A549 (cell line): ENCODE measurements at regions of chr12 and their contacts with region 1.

Region 1: GRCh38 chr12:3803865-3804472 is 51.1 kb upstream of the CRACR2A start:
- DNase-seq: peak; percentile 41 to 79
- ATAC-seq: peak; percentile 88 to 96
- H3K4me3 ChIP-seq: no peak overlapping the region
- H3K27ac ChIP-seq: no peak overlapping the region
- H3K4me1 ChIP-seq: no peaks in the 10 kb centered on the region
- CTCF ChIP-seq: peak; percentile 86
- EP300 ChIP-seq: no peak
- POLR2A ChIP-seq: no peak
- RAD21 ChIP-seq: peak; percentile 86 to 89

Region 2: DNA sequence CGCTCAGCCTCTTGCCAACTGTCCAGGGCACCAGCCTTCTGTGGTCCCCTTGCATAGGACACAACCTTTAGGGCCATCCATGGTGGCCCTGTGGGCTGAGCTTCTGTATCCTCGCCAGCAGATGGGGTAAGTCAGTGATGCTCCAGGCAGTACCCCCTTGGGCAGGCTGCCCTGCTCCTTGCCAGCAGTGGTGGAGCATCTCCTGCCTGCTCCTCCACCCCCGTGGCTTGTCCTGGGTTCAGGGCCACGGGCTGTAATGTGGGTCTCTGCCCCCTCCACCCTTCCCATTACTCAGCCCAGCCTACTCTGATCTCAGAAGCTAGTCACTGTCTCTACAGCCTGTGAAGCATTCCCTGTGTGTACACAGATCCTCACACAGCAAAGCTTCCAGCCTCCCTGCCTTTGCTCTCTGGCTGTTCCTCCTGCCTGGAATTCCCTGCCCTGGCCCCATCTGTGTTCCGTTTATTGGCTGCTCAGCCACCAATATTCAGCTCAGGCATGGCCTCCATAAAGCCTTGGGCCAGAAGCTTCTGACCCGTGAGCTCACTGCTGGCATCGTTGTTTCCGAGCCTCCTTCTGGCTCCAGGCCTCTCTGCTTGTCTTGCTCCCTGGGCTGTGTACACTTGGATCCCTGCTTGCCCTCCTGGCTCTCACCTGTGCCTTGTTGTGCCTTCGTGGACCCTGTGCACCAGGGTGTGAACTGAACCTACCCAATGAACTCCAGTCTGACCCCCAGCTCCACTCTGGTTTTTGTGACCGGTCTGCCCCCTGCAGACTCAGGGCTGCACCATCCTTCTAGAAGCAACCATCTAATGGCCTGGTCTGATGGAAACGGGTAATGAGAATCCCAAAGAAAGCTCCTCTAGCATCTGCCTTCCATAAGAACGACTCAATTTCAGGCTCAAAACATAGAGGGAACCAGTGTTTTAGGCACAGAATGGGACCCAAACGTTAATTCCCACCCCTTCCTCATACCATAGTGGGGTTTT is 490.0 kb before region 1 on chr12:
- CTCF ChIA-PET with region 1: interaction called, 56 read pairs
- POLR2A ChIA-PET with region 1: no interaction called
- DNase-seq: peak; percentile 52 to 55
- ATAC-seq: peak; percentile 79 to 92
- H3K4me3 ChIP-seq: no peak overlapping the region
- H3K27ac ChIP-seq: no peak overlapping the region
- H3K4me1 ChIP-seq: no peaks in the 10 kb centered on the region
- CTCF ChIP-seq: peak; percentile 35; the same call in 2 of the 3 replicates
- EP300 ChIP-seq: no peak
- POLR2A ChIP-seq: no peak
- RAD21 ChIP-seq: peak; percentile 31 to 52; a peak in 4 of 5 replicates

Region 3: DNA sequence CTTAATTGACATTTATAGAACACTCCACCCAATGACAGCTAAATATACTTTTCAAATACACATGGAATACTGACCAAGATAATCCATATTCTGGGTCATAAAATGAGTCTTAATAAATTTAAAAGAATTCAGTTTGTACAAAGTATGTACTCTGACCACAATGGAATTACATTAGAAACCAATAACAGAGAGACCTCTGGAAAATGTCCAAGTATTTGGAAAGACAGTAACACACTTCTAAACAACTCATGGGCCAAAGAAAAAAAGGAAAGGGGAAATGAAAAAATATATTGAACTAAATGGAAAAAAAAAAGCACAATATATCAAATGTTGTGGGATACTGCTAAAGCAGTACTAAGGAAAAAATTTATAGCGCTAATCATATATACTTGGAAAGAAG is 103.1 kb before region 1 on chr12:
- CTCF ChIA-PET with region 1: no interaction called
- POLR2A ChIA-PET with region 1: no interaction called
- DNase-seq: no peak
- ATAC-seq: no peak
- H3K4me3 ChIP-seq: no peak overlapping the region
- H3K27ac ChIP-seq: no peak overlapping the region
- H3K4me1 ChIP-seq: no peaks in the 10 kb centered on the region
- CTCF ChIP-seq: no peak
- EP300 ChIP-seq: no peak
- POLR2A ChIP-seq: no peak
- RAD21 ChIP-seq: no peak

Region 4: DNA sequence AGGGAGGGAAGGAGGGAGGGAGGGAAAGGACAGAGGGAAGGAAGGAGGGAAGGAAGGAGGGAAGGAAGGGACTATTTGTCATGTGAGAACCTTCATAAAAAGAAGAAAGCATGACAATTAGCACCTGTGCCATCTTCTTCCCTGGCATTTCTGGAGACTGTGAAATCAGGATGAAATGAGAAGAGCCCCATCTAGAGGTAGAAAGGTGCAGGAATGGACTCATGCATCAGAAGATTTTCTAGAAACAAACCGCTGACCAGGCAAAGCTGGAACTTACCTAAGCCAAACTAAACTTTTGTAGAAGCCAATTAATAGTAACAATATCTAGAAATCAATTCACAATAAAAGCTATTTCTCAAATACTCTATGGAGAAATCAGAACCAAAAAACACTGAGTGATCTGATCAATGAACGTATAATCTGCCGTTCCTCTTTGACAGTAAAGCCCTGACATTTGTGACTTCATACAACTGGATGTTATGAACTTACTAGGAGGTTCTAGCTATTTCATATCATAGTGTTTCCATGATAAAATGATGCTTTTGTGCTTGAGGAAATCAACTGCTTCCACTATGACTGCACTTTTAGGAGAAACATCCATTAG is 26.7 kb before region 1 on chr12:
- CTCF ChIA-PET with region 1: interaction called, 12 read pairs
- POLR2A ChIA-PET with region 1: no interaction called
- DNase-seq: peak; percentile 25 to 46
- ATAC-seq: peak; percentile 74 to 86; a peak in 5 of 6 replicates
- H3K4me3 ChIP-seq: no peak overlapping the region
- H3K27ac ChIP-seq: no peak overlapping the region
- H3K4me1 ChIP-seq: no peaks in the 10 kb centered on the region
- CTCF ChIP-seq: peak; percentile 58
- EP300 ChIP-seq: no peak
- POLR2A ChIP-seq: no peak
- RAD21 ChIP-seq: peak; percentile 63 to 81

Region 5: DNA sequence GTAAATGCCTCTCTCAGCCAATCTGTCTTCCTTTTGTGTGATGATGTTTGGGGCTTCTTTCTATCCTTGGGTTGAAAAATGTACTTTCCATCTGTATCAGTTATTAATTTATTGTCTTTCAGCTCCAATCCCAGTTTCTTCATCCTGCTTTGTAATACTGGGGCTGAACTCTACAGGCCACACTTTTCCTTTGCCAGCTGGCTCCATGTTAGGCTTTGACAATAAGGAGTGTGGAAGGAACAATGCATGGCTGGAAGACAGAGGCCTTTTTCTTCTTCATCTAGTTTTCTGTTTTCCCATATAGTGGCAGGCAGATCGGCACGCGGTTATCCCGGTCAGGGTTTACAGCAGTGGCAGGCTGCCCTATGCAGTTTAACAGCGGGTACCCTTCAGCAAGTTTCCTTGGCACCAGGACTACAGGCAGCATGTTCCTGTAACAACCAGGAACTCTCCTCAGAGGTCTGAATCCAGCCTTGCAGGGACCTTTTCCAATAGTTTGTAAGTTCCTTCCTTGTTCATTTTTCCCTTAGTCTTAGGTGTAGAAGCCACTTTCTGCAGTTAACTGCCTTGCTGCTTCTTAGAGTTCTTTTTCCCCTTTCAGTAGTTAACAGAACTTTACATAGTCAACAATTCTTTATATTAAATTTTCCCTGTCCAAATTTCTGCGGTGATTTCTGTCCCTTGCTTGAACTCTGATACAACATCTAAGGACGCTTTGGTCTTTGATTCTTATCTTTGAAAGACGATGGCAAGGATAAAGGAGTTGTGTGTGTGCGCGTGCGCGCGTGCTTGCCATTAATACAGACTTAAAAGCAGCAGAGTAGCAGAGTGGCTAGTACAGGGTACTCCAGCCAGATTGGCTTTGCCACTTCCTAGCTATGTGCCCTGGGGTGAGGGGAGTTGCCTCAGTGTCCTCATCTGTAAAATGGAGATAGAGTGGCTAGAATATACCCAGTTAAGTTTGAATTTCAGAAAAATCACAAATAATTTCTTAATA is 12.4 kb before region 1 on chr12:
- CTCF ChIA-PET with region 1: interaction called, 27 read pairs
- POLR2A ChIA-PET with region 1: no interaction called
- DNase-seq: no peak
- ATAC-seq: no peak
- H3K4me3 ChIP-seq: no peak overlapping the region
- H3K27ac ChIP-seq: no peak overlapping the region
- H3K4me1 ChIP-seq: no peaks in the 10 kb centered on the region
- CTCF ChIP-seq: no peak
- EP300 ChIP-seq: no peak
- POLR2A ChIP-seq: no peak
- RAD21 ChIP-seq: no peak

Region 6: DNA sequence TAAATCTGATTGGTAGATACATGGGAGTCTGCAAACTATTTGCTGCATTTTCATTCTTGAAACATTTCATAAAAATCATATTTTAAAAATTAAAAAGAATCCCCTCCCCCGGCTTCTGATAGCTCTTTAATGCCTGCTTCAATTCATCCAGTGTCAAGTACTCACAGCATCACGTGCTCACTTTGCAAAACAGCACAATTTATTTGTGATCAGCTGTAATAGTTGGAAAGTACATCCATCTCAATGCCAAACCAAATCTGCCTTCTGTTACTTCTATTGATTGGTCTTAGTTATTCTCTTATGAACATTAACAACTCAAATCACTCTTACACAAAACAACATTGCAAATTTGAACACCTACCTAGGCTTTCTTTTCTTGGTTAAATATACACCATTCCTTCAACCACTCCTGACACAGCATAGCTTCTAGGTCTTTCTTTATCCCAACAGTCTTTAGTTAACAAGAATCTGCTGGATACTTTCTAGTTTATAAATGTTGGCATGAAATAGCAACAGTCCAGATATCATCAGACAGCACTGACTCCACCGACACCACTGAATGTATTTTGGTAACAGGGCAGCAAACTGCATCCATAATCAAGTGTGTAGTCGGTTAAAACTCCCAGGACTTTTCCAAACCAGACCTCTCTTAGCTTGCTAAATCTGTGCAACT is 11.3 kb after region 1 on chr12:
- CTCF ChIA-PET with region 1: interaction called, 28 read pairs
- POLR2A ChIA-PET with region 1: no interaction called
- DNase-seq: no peak
- ATAC-seq: no peak
- H3K4me3 ChIP-seq: no peak overlapping the region
- H3K27ac ChIP-seq: no peak overlapping the region
- H3K4me1 ChIP-seq: no peaks in the 10 kb centered on the region
- CTCF ChIP-seq: no peak
- EP300 ChIP-seq: no peak
- POLR2A ChIP-seq: no peak
- RAD21 ChIP-seq: no peak

Region 7: GRCh38 chr12:3821441-3821840 is 17.5 kb after region 1 on chr12:
- CTCF ChIA-PET with region 1: interaction called, 28 read pairs
- POLR2A ChIA-PET with region 1: no interaction called
- DNase-seq: no peak
- ATAC-seq: no peak
- H3K4me3 ChIP-seq: no peak overlapping the region
- H3K27ac ChIP-seq: no peak overlapping the region
- H3K4me1 ChIP-seq: no peaks in the 10 kb centered on the region
- CTCF ChIP-seq: no peak
- EP300 ChIP-seq: no peak
- POLR2A ChIP-seq: no peak
- RAD21 ChIP-seq: no peak